Activated naive CD4-positive, alpha-beta T cell treated with anti-CD3 and anti-CD28 coated beads for 36 hours (primary cell): ENCODE measurements at regions of chr6 and their contacts with region 1.

Region 1: DNA sequence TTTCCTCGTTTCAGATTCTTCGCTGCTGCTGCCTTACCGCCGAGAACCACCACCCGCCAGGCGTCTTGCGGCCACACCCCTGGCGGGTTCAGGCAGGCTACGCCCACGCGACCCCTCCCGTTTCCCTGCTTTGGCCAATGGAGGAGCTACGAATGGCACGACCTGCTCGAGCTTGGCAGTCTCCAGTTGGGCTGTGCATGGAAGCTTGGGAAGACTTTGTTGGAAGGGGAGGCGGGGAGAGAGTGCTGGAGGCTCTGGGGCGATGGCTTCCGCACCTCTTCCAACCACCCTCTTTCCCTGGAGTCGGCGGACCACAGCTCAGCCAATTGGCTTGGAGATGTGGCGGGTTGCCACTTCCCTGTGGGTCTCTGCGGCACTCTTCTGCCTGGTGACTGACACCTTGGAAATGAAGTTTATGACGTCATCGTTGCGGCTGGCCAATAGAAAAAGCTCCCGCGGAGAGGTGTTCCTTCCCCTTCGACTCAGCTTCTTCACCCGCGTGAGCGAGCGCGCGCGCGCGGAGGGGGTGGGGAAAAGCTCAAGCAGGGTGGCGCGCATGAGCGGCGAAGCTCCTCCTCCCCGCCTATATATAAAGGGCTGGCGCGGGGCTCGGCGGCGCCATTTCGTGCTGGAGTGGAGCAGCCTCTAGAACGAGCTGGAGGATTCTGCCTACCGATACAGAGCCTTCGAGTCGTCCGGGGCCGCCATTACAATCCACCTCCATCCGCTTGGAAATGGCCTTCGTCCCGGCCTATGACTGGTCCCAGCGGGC is 3.4 kb downstream of the BRD2 start:
- DNase-seq: peak; percentile 100
- H3K4me3 Mint-ChIP-seq: peak overlapping the region; percentile 93
- H3K27ac Mint-ChIP-seq: peak overlapping the region; percentile 100
- H3K4me1 Mint-ChIP-seq: peaks cover 24% of the 10 kb centered on the region
- H3K27me3 Mint-ChIP-seq: no peaks in the 10 kb centered on the region

Region 2: DNA sequence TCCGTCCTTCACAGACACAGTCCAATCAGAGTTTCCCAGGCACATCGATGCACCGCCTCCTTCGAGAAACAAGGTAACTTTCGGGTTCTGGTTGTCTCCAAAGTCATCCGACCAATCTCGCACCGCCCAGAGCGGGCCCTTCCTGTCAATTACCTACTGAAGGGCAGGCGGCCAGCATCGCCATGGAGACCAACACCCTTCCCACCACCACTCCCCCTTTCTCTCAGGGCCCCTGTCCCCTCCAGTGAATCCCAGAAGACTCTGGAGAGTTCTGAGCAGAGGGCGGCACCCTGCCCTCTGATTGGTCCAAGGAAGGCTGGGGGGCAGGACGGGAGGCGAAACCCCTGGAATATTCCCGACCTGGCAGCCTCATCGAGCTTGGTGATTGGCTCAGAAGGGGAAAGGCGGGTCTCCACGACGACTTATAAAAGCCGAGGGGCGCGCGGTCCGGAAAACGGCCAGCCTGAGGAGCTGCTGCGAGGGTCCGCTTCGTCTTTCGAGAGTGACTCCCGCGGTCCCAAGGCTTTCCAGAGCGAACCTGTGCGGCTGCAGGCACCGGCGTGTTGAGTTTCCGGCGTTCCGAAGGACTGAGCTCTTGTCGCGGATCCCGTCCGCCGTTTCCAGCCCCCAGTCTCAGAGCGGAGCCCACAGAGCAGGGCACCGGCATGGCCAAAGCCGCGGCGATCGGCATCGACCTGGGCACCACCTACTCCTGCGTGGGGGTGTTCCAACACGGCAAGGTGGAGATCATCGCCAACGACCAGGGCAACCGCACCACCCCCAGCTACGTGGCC is 1144.3 kb before region 1 on chr6 and contains the start of gene HSPA1B:
- CTCF ChIA-PET with region 1: no interaction called
- intact Hi-C with region 1: loop called (anchors 10 kb)
- DNase-seq: peak; percentile 98
- H3K4me3 Mint-ChIP-seq: peak within 1 kb of the TSS; percentile 85
- H3K27ac Mint-ChIP-seq: peak within 1 kb of the TSS; percentile 97
- H3K4me1 Mint-ChIP-seq: peaks cover 46% of the 10 kb centered on the region
- H3K27me3 Mint-ChIP-seq: no peaks in the 10 kb centered on the region
- total RNA-seq, gene HSPA1B: 47.8 to 50.1 TPM

Region 3: GRCh38 chr6:32838114-32838958 is 133.4 kb before region 1 on chr6 and contains the start of gene TAP2:
- CTCF ChIA-PET with region 1: interaction called, 10 read pairs
- intact Hi-C with region 1: no loop called
- DNase-seq: peak; percentile 98
- H3K4me3 Mint-ChIP-seq: peak within 1 kb of the TSS; percentile 89
- H3K27ac Mint-ChIP-seq: peak within 1 kb of the TSS; percentile 99
- H3K4me1 Mint-ChIP-seq: peaks cover 81% of the 10 kb centered on the region
- H3K27me3 Mint-ChIP-seq: no peaks in the 10 kb centered on the region
- total RNA-seq, gene TAP2: 136 to 138 TPM

Region 4: GRCh38 chr6:32933636-32934085 is 38.1 kb before region 1 on chr6:
- CTCF ChIA-PET with region 1: interaction called, 90 read pairs
- intact Hi-C with region 1: loop called (anchors 1 kb)
- DNase-seq: peak; percentile 90
- H3K4me3 Mint-ChIP-seq: no peak overlapping the region
- H3K27ac Mint-ChIP-seq: no peak overlapping the region
- H3K4me1 Mint-ChIP-seq: no peaks in the 10 kb centered on the region
- H3K27me3 Mint-ChIP-seq: no peaks in the 10 kb centered on the region

Region 5: GRCh38 chr6:32984605-32985389 is 13.0 kb after region 1 on chr6:
- CTCF ChIA-PET with region 1: interaction called, 143 read pairs
- intact Hi-C with region 1: loop called (anchors 1 kb)
- DNase-seq: peak; percentile 97
- H3K4me3 Mint-ChIP-seq: no peak overlapping the region
- H3K27ac Mint-ChIP-seq: no peak overlapping the region
- H3K4me1 Mint-ChIP-seq: peaks cover 14% of the 10 kb centered on the region
- H3K27me3 Mint-ChIP-seq: no peaks in the 10 kb centered on the region

Region 6: GRCh38 chr6:33417903-33418689 is 446.3 kb after region 1 on chr6 and contains the start of gene CUTA:
- CTCF ChIA-PET with region 1: no interaction called
- intact Hi-C with region 1: loop called (anchors 2 kb)
- DNase-seq: peak; percentile 100
- H3K4me3 Mint-ChIP-seq: peak within 1 kb of the TSS; percentile 92
- H3K27ac Mint-ChIP-seq: peak within 1 kb of the TSS; percentile 99
- H3K4me1 Mint-ChIP-seq: peaks cover 65% of the 10 kb centered on the region
- H3K27me3 Mint-ChIP-seq: no peaks in the 10 kb centered on the region
- total RNA-seq, gene CUTA: 163 to 181 TPM